ENCODE measurements at regions of chr3 and their contacts with region 1.

Region 1: GRCh38 chr3:185937689-185938463 is at the start of gene TRA2B:
- DNase-seq: peak; percentile 94 to 99 (median 99)
- ATAC-seq: peak; percentile 90 to 93 (median 92)
- H3K4me3 ChIP-seq: peak within 1 kb of the TSS; percentile 80 to 100
- H3K4me3 Mint-ChIP-seq: peak within 1 kb of the TSS; percentile 98 to 100 (median 100)
- H3K27ac ChIP-seq: peak within 1 kb of the TSS; percentile 99
- H3K27ac Mint-ChIP-seq: peak within 1 kb of the TSS; percentile 100
- H3K4me1 ChIP-seq: peaks cover 8 to 20% of the 10 kb centered on the region in 2 experiments
- H3K4me1 Mint-ChIP-seq: peaks cover 37 to 46% (median 42%) of the 10 kb centered on the region in 3 donors
- H3K27me3 ChIP-seq: no peaks in the 10 kb centered on the region
- H3K27me3 Mint-ChIP-seq: no peaks in the 10 kb centered on the region
- total RNA-seq, gene TRA2B: 166 to 583 (median 175) TPM

Region 2: DNA sequence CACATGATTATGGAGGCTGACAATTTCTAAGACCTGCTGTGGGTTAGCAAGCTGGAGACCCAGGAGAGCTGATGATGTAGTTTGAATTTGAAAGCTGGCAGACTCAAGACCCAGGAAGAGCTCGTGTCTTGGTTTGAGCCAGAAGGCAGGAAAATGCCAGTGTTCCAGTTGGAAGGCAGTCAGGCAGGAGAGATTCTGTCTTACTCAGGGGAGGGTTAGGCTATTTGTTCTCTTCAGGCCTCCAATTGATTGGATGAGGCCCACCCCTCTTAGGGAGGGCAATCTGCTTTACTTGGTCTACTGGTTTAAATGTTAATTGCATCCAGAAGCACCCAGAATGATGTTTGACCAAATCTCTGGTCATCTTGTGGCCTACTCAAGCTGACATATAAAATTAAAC is 72.6 kb before region 1 on chr3:
- CTCF ChIA-PET with region 1: no interaction called
- POLR2A ChIA-PET with region 1: no interaction called
- DNase-seq: no peak
- ATAC-seq: no peak
- H3K4me3 ChIP-seq: no peak overlapping the region
- H3K4me3 Mint-ChIP-seq: no peak overlapping the region
- H3K27ac ChIP-seq: no peak overlapping the region
- H3K27ac Mint-ChIP-seq: no peak overlapping the region
- H3K4me1 ChIP-seq: no peaks in the 10 kb centered on the region
- H3K4me1 Mint-ChIP-seq: no peaks in the 10 kb centered on the region
- H3K27me3 ChIP-seq: peaks cover 0 to 2% of the 10 kb centered on the region in 2 experiments
- H3K27me3 Mint-ChIP-seq: peaks cover 9 to 14% of the 10 kb centered on the region in 2 donors

Region 3: GRCh38 chr3:185912929-185913901 is 24.7 kb before region 1 on chr3:
- CTCF ChIA-PET with region 1: interaction called in 1 of 2 experiments, 3 read pairs
- POLR2A ChIA-PET with region 1: interaction called, 7 to 20 read pairs
- DNase-seq: no peak
- ATAC-seq: peak; percentile 14 to 29 (median 20)
- H3K4me3 ChIP-seq: no peak overlapping the region
- H3K4me3 Mint-ChIP-seq: peak overlapping the region in 1 of 3 donors; percentile 32
- H3K27ac ChIP-seq: no peak overlapping the region
- H3K27ac Mint-ChIP-seq: no peak overlapping the region
- H3K4me1 ChIP-seq: no peaks in the 10 kb centered on the region
- H3K4me1 Mint-ChIP-seq: peaks cover 6 to 30% (median 8%) of the 10 kb centered on the region in 3 donors
- H3K27me3 ChIP-seq: no peaks in the 10 kb centered on the region
- H3K27me3 Mint-ChIP-seq: no peaks in the 10 kb centered on the region

Region 4: GRCh38 chr3:185924375-185924774 is 13.5 kb before region 1 on chr3:
- CTCF ChIA-PET with region 1: interaction called, 25 to 35 read pairs
- POLR2A ChIA-PET with region 1: interaction called, 14 to 45 read pairs
- DNase-seq: no peak
- ATAC-seq: no peak
- H3K4me3 ChIP-seq: no peak overlapping the region
- H3K4me3 Mint-ChIP-seq: peak overlapping the region in 1 of 3 donors; percentile 98
- H3K27ac ChIP-seq: no peak overlapping the region
- H3K27ac Mint-ChIP-seq: no peak overlapping the region
- H3K4me1 ChIP-seq: peaks cover 15 to 32% of the 10 kb centered on the region in 2 experiments
- H3K4me1 Mint-ChIP-seq: peaks cover 63 to 71% (median 66%) of the 10 kb centered on the region in 3 donors
- H3K27me3 ChIP-seq: no peaks in the 10 kb centered on the region
- H3K27me3 Mint-ChIP-seq: no peaks in the 10 kb centered on the region

Region 5: DNA sequence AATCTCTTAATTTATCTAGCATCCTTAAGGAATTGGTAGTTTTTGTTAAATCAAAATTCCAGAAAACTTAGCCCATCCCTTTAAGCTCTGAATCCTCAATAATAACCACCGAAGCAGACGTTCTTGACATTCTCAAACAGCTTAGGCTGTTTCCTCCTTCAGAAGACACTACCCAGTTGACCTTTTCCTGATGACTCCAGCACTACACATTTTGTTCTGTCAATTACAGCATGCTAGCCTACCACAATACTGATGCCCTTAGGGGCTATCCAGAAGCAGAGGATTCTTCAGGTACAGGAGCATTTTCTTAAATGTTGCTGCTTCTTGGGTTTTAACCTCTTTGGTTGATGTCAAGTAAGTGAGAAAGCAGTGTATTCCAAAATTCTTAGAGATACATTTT is 137.6 kb after region 1 on chr3:
- CTCF ChIA-PET with region 1: no interaction called
- POLR2A ChIA-PET with region 1: no interaction called
- DNase-seq: no peak
- ATAC-seq: no peak
- H3K4me3 ChIP-seq: no peak overlapping the region
- H3K4me3 Mint-ChIP-seq: no peak overlapping the region
- H3K27ac ChIP-seq: no peak overlapping the region
- H3K27ac Mint-ChIP-seq: no peak overlapping the region
- H3K4me1 ChIP-seq: no peaks in the 10 kb centered on the region
- H3K4me1 Mint-ChIP-seq: peaks cover 0 to 6% (median 0%) of the 10 kb centered on the region in 3 donors
- H3K27me3 ChIP-seq: peaks cover 0 to 2% of the 10 kb centered on the region in 2 experiments
- H3K27me3 Mint-ChIP-seq: peaks cover 11 to 23% of the 10 kb centered on the region in 2 donors

Region 6: GRCh38 chr3:186570096-186570940 is 632.4 kb after region 1 on chr3 and contains the start of gene DNAJB11:
- CTCF ChIA-PET with region 1: interaction called, 7 to 11 read pairs
- POLR2A ChIA-PET with region 1: interaction called, 4 to 12 read pairs
- DNase-seq: peak; percentile 87 to 100 (median 99)
- ATAC-seq: peak; percentile 85 to 87 (median 86)
- H3K4me3 ChIP-seq: peak within 1 kb of the TSS; percentile 77 to 88
- H3K4me3 Mint-ChIP-seq: peak within 1 kb of the TSS; percentile 88 to 92 (median 90)
- H3K27ac ChIP-seq: peak within 1 kb of the TSS; percentile 80
- H3K27ac Mint-ChIP-seq: peak within 1 kb of the TSS; percentile 96 to 98
- H3K4me1 ChIP-seq: peaks cover 25 to 36% of the 10 kb centered on the region in 2 experiments
- H3K4me1 Mint-ChIP-seq: peaks cover 63 to 68% (median 64%) of the 10 kb centered on the region in 3 donors
- H3K27me3 ChIP-seq: no peaks in the 10 kb centered on the region
- H3K27me3 Mint-ChIP-seq: no peaks in the 10 kb centered on the region
- total RNA-seq, gene DNAJB11: 28.7 to 65.4 (median 31.7) TPM

Measured in T-cell (primary cell).